PC-3 (cell line): ENCODE measurements at regions of chr6 and their contacts with region 1.

Region 1: DNA sequence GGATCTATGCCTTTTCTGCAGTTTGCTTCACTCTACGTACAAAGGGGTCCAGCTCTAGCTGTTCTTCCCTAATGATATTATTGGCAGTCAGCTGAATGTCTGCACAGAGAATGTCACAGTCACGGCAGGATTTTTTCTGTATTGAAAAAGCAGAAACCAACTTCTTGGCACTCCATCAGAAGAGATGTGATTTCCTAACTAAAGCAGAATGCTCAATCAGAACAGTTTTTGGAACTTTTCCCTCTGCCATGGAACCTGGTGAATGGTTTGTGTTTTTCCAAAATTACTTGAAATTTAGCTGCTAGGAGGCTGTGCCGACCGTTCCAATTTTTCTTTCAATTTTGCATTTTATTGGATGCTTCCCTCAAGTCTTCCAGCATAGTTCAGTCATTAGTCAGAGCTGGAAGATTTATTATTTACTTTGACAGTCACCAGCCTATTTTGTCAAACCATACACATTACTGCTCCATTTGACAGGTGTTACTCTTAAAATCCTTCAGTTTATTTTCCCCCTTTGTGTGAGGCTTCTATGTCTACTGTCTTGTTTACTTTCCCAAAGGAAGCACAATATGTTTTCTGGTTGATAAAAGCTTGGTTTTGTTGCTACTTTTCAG is 259.6 kb upstream of the EPHA7 start:
- DNase-seq: peak; percentile 71
- ATAC-seq: peak; percentile 51
- H3K4me3 ChIP-seq: peak overlapping the region; percentile 56; the same call in 1 of the 2 replicates
- H3K27ac ChIP-seq: peak overlapping the region; percentile 68
- H3K4me1 ChIP-seq: peaks cover 39% of the 10 kb centered on the region
- H3K27me3 ChIP-seq: no peaks in the 10 kb centered on the region
- CTCF ChIP-seq: no peak

Region 2: DNA sequence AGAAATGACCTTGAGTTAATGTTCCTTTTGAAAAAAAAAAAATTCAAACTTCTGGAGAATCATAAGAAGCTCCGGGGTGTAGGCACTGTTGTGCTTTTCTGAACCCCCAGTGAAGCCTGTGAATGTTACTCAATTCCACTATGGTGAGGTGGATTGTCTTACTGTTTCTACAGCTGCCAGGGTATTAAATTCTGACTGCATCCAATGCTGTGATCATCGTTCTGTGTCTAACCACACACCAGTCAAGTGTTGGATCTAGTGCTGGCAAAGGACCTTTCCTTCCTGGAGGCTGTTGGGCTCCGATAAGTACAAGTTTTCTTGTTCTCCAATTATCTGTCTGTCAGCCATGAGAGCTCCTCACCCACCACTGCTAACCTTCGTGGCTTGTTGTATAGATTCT is 97.6 kb before region 1 on chr6:
- CTCF ChIA-PET with region 1: no interaction called
- POLR2A ChIA-PET with region 1: interaction called, 11 read pairs
- intact Hi-C with region 1: no loop called
- DNase-seq: no peak
- ATAC-seq: no peak
- H3K4me3 ChIP-seq: no peak overlapping the region
- H3K27ac ChIP-seq: no peak overlapping the region
- H3K4me1 ChIP-seq: no peaks in the 10 kb centered on the region
- H3K27me3 ChIP-seq: no peaks in the 10 kb centered on the region
- CTCF ChIP-seq: no peak

Region 3: DNA sequence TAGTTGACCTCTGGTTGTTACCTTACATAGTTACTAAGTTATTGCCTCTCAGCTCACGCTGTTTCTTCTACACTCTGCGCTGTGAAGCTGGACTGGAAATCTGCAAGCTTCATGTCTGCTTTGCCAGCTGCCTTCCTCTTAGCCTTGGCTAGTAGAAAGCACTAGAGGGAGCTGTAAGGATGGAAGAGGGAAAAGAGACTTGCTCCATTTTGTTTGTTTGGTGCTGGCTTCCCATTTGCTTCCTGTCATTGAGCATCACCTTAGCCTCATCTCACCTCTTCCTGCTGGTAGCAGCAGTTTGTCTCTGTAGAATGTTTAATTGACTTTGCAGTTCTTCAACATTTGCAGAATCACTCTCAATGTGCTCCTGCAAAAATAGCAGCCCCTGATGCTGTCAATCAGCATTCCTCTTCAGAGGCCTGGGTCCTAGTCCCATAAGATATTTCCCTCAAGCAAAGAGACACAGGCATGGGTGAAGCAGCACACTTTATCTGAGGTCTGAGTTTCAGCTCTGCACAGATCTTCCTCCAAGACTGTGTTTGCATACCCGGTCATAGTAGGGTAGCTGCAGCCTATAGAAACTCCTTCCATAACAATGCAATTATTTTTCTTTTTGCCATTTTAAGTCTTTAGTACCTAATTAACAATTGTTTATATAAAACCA is 42.6 kb after region 1 on chr6:
- CTCF ChIA-PET with region 1: no interaction called
- POLR2A ChIA-PET with region 1: interaction called, 14 read pairs
- intact Hi-C with region 1: no loop called
- DNase-seq: peak; percentile 28
- ATAC-seq: peak; percentile 63
- H3K4me3 ChIP-seq: no peak overlapping the region
- H3K27ac ChIP-seq: no peak overlapping the region
- H3K4me1 ChIP-seq: no peaks in the 10 kb centered on the region; the same call in 1 of the 2 replicates
- H3K27me3 ChIP-seq: no peaks in the 10 kb centered on the region
- CTCF ChIP-seq: peak; percentile 56

Region 4: DNA sequence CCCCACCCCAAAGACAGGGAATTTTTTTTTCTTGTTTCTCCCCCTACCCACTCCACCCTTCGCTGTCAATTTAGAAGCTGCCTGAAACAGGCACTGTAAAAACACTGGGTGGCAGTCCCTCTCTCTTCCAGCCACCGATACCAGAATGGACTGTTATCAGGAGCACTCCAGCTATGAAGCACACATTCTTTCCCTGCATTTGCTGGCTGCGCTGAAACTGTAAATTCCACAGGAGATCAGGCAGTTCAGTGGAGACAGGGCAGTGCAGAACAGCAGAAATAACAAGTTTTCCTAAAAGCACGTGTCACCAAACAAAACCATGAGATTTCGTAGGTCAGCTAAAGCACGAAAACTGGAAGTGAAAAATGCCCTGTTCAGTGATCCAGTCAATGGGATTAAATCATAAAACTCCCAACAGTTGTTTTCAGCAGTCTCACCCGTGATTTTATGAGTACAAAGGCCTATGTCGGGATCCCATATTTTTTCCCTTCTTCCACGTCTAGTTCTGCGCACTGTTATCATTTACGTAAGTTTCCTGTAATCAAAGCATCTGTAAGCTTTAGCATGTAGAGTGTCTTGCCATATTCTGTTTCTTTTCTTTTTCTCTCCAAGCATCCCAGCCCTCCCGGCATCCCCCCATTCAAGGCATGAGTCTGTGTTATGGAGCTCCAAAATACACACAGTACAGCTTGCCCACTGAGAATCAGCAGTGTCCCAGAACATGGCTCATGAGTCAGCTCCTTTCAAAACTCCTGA is 100.3 kb after region 1 on chr6:
- CTCF ChIA-PET with region 1: no interaction called
- POLR2A ChIA-PET with region 1: no interaction called
- intact Hi-C with region 1: loop called (anchors 2 kb)
- DNase-seq: no peak
- ATAC-seq: no peak
- H3K4me3 ChIP-seq: no peak overlapping the region
- H3K27ac ChIP-seq: no peak overlapping the region
- H3K4me1 ChIP-seq: peaks cover 16% of the 10 kb centered on the region
- H3K27me3 ChIP-seq: no peaks in the 10 kb centered on the region
- CTCF ChIP-seq: no peak